Lower leg skin (tissue), 4 donors: ENCODE measurements at regions of chr1 and their contacts with region 1.

Region 1: GRCh38 chr1:1906185-1907097 is 8.6 kb upstream of the CALML6 start:
- DNase-seq: peak; percentile 81 to 96
- H3K4me3 ChIP-seq: no peak overlapping the region
- CTCF ChIP-seq: peak in 1 of 3 donors; percentile 56
- POLR2A ChIP-seq: no peak

Region 2: GRCh38 chr1:1758692-1759455 is 147.6 kb before region 1 on chr1:
- intact Hi-C with region 1: loop called (anchors 10 kb)
- DNase-seq: peak in 1 of 2 donors; percentile 92
- H3K4me3 ChIP-seq: no peak overlapping the region
- CTCF ChIP-seq: no peak
- POLR2A ChIP-seq: no peak